Heart right ventricle (tissue), 16 donors: ENCODE measurements at regions of chr15 and their contacts with region 1.

Region 1: DNA sequence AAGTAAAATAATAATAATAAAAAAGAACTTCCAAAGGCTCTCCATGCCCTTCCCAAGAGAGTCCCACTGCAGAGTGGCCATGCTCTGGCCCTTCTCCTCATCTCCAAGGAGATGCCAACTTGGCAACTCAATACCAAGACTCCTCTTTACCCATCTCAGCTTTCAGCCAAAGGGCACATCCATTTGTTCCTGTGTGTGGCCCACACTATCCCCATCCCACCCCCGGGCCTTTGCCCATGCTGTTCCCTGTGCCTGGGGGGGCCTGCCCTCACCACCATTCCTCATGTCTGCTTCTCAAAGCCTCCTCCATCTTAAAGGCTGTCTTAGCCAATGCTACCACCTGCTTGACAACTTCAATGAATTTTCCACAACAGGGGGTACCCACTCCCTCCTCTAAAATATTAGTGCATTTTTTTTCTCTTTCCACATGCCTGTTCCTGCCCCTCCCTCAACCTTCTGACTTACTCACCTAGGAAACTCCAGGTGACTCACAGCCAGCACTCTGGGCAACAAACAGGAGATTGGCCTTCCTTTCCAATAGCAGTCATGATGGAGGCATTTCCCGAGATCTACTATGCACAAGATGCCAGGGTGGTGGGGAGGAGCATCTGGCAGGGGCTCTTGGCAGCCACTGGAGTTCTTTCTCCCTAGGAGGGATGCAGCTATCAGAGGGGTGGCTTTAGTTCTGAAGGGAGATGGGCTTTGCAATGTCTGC is 109.4 kb upstream of the SMAD3 start:
- DNase-seq: no peak
- ATAC-seq: peak in 1 of 8 donors; percentile 11
- H3K4me3 ChIP-seq: no peak overlapping the region
- H3K27ac ChIP-seq: no peak overlapping the region
- H3K4me1 ChIP-seq: peaks cover 0 to 19% (median 0%) of the 10 kb centered on the region in 9 donors
- H3K27me3 ChIP-seq: no peaks in the 10 kb centered on the region
- CTCF ChIP-seq: no peak

Region 2: GRCh38 chr15:66740802-66741201 is 215.2 kb before region 1 on chr15:
- intact Hi-C with region 1: no loop called
- DNase-seq: peak in 1 of 2 donors; percentile 60
- ATAC-seq: peak in 3 of 8 donors; percentile 15 to 26 (median 19)
- H3K4me3 ChIP-seq: no peak overlapping the region
- H3K27ac ChIP-seq: peak overlapping the region in 1 of 10 donors; percentile 15
- H3K4me1 ChIP-seq: peaks cover 17 to 96% (median 45%) of the 10 kb centered on the region in 9 donors
- H3K27me3 ChIP-seq: no peaks in the 10 kb centered on the region
- CTCF ChIP-seq: no peak

Region 3: GRCh38 chr15:67048281-67049279 is 92.6 kb after region 1 on chr15:
- intact Hi-C with region 1: loop called in 1 of 10 experiments (anchors 10 kb)
- DNase-seq: no peak
- ATAC-seq: peak; percentile 26 to 64 (median 49)
- H3K4me3 ChIP-seq: no peak overlapping the region
- H3K27ac ChIP-seq: peak overlapping the region in 3 of 10 donors; percentile 3 to 48 (median 17)
- H3K4me1 ChIP-seq: peaks cover 0 to 52% (median 24%) of the 10 kb centered on the region in 9 donors
- H3K27me3 ChIP-seq: no peaks in the 10 kb centered on the region
- CTCF ChIP-seq: no peak

Region 4: DNA sequence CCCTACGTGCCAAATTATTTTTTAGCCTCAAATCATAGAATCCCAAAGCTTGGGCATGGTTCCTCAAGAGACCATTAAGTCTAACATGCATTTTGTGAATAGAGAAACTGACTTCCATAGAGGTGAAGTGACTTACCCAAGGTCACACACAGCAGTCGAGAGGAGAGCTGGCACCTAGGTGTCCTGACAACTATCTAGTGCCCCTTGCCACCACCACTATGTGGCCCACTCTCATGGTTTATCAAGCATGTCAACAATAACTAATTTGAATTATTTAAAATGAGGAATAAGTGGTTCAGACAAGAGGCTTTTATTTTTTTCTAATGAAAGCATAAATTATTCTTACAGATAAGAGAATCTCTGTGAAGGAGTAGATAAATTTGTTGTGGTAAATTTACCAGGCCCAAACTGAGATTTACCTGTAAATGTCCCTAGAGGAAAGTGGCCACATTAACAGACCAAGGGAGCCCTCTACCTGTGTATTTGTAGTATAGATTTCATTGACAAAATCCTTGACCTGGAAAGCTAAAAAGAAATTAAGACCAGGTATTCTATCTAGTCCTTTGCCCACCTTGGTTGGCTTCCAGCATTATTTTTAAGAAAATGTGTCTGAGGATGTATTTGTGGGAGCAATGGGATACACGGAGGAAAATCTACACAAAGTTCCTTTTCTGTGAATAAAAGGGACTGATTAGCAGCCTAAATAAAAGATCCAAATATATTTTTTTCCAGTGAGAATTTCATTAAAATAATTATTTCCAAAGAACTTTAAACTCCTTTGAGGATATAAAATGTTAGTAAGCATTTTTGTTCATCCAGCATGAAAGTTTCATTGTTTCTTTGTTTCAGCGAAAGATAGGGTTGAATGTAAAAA is 347.7 kb after region 1 on chr15:
- intact Hi-C with region 1: loop called in 1 of 10 experiments (anchors 2 kb)
- DNase-seq: peak in 1 of 2 donors; percentile 6
- ATAC-seq: peak in 2 of 8 donors; percentile 58 to 65
- H3K4me3 ChIP-seq: no peak overlapping the region
- H3K27ac ChIP-seq: no peak overlapping the region
- H3K4me1 ChIP-seq: no peaks in the 10 kb centered on the region
- H3K27me3 ChIP-seq: no peaks in the 10 kb centered on the region
- CTCF ChIP-seq: peak; percentile 17 to 75 (median 57)

Region 5: GRCh38 chr15:67396114-67396513 is 440.1 kb after region 1 on chr15:
- intact Hi-C with region 1: loop called in 1 of 10 experiments (anchors 10 kb)
- DNase-seq: no peak
- ATAC-seq: no peak
- H3K4me3 ChIP-seq: no peak overlapping the region
- H3K27ac ChIP-seq: no peak overlapping the region
- H3K4me1 ChIP-seq: peaks cover 0 to 12% (median 0%) of the 10 kb centered on the region in 9 donors
- H3K27me3 ChIP-seq: no peaks in the 10 kb centered on the region
- CTCF ChIP-seq: no peak